Naive thymus-derived CD8-positive, alpha-beta T cell (primary cell): ENCODE measurements at regions of chr11 and their contacts with region 1.

Region 1: GRCh38 chr11:72040726-72041441 is 39.5 kb downstream of the NUMA1 start:
- DNase-seq: peak; percentile 72 to 91 (median 80)
- ATAC-seq: peak; percentile 68 to 78
- H3K4me3 Mint-ChIP-seq: no peak overlapping the region
- H3K27ac Mint-ChIP-seq: no peak overlapping the region
- H3K4me1 Mint-ChIP-seq: peaks cover 34 to 44% (median 43%) of the 10 kb centered on the region in 4 donors
- H3K27me3 Mint-ChIP-seq: no peaks in the 10 kb centered on the region

Region 2: DNA sequence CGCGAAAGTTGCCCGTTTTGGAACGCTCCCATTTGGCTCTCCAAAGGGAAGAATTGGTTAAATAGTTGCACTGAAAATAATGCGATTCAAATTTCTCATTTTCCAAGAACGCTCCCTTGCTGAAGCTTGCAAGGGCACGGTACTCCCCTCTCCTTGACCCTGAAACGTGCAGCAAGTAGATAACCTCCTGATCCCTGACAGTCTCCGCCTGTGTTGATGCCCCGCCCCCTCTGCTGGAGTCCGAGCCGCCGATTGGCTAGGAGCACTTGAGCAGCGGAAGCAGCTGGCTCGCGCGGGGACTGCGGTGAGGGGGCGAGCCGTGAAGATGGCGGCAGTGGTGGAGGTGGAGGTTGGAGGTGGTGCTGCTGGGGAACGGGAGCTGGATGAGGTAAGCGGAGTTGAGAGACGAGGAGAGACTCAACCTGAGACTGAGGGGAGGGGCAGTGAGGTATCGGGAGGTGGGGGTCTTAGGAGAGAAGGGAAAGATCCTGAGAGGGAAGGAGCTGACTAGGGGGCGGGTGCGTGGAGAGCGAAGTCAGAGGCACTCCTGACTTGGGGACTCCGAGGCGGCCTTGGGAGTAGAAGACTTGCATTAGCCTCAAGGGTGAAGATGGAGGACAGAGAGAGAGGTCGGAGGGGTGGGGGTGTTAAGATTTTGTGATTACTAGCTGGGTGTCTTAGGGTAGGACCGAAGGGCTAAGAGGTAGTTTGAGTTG is 112.0 kb before region 1 on chr11 and contains the start of gene RNF121:
- POLR2A ChIA-PET with region 1: interaction called, 12 read pairs
- DNase-seq: peak; percentile 94 to 99 (median 97)
- ATAC-seq: peak; percentile 90 to 92
- H3K4me3 Mint-ChIP-seq: peak within 1 kb of the TSS; percentile 94 to 99 (median 98)
- H3K27ac Mint-ChIP-seq: peak within 1 kb of the TSS; percentile 97 to 100 (median 99)
- H3K4me1 Mint-ChIP-seq: peaks cover 25 to 57% (median 55%) of the 10 kb centered on the region in 4 donors
- H3K27me3 Mint-ChIP-seq: no peaks in the 10 kb centered on the region
- polyA plus RNA-seq, gene RNF121: 5.7 to 9.4 (median 7.7) TPM

Region 3: DNA sequence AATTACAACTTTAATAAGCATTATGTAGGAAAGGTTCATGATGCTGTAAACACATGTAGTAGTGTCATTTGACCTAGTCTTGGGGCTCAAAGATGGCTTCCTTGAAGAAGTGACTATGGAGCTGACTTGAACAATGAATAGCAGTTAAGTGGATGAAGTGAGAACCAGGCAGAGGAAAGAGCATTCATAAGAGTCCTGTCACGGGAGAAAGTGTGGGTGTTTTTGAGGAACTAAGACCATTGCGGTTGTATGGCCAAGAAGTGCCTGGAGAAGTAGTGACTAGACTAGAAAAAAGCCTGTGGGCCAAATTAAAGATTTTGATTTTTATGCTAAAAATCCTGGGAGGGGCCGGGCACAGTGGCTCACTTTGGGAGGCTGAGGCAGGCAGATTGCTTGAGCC is 49.4 kb before region 1 on chr11:
- POLR2A ChIA-PET with region 1: no interaction called
- DNase-seq: no peak
- ATAC-seq: no peak
- H3K4me3 Mint-ChIP-seq: no peak overlapping the region
- H3K27ac Mint-ChIP-seq: peak overlapping the region in 2 of 10 donors; percentile 14 to 19
- H3K4me1 Mint-ChIP-seq: peaks cover 0 to 34% (median 2%) of the 10 kb centered on the region in 4 donors
- H3K27me3 Mint-ChIP-seq: no peaks in the 10 kb centered on the region

Region 4: DNA sequence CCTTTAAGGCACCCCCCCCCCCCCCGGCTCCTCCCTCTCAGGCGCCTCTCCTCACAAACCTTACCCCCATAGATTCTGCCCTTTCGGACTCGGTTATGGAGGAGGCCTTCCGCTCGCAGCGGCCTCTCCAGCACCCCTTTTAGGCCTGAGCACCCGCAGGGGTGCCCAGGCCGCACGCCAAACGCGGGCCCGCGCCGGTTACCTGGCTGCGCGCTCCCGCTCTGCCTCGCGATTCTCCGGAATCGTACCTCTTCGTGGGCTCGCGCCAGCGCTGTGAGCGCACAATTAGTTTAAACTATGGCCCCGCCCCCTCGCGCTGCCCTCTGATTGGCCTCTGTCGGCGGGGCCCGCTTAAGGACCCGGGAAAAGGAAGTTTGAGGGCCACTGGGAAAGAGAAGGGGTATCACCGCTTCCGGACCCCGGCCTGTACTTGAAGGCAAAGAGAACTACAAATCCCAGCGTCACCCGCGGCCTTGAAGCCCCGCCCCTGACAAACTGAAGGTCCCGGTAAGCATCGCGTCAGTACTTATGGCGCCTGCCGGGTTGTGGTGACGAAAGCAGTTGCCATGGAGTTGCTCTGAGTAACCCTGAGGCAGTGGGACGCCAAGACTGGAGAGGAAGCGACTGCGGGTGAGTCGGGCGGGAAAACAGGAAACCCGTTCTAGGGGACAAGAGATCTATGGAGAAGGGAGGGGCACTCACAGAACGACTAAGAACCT is 39.5 kb after region 1 on chr11 and contains the starts of genes LRRC51 and NUMA1:
- POLR2A ChIA-PET with region 1: interaction called, 56 read pairs
- DNase-seq: peak; percentile 89 to 100 (median 99)
- ATAC-seq: peak; percentile 89 to 92
- H3K4me3 Mint-ChIP-seq: peak within 1 kb of the TSS; percentile 88 to 100 (median 92)
- H3K27ac Mint-ChIP-seq: peak within 1 kb of the TSS; percentile 95 to 100 (median 98)
- H3K4me1 Mint-ChIP-seq: peaks cover 25 to 56% (median 44%) of the 10 kb centered on the region in 4 donors
- H3K27me3 Mint-ChIP-seq: no peaks in the 10 kb centered on the region
- polyA plus RNA-seq, gene LRRC51: 1.5 to 3.1 (median 2.5) TPM
- polyA plus RNA-seq, gene NUMA1: 12.0 to 119 (median 30.6) TPM

Region 5: DNA sequence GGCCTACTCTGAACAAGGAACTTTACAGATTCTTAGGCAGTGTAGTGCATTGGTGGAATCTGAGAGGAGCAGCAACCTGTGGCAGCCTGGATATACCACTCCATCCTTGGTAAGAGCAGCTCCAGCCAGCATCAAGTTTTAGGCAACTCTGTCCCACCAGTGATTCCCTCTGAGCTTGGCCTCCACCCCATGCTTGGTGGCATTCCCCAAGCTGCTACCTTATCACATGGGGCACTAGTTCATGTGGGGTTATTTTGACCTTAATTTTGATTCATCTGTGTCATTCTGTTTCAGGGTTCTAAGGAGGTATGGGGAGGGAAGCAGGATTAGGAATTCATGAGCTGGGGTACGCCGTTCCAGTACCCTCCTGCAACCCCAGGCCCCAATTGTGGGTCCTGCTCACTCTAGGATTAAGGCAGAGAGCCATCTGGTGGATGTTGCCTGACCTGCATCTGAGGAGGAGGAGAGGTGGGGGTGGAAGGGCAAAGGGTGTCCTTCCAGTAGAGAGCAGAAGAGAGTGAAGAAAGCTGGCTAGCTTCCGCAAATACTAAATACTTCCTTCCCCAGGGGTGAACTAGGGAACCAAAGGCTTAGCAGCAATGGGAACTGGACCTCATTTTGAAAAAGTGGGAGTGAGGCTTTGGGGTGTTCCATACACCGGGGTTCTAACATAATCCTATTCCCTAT is 50.3 kb after region 1 on chr11:
- POLR2A ChIA-PET with region 1: interaction called, 35 read pairs
- DNase-seq: peak; percentile 34 to 85 (median 68)
- ATAC-seq: peak; percentile 99
- H3K4me3 Mint-ChIP-seq: no peak overlapping the region
- H3K27ac Mint-ChIP-seq: peak overlapping the region in 8 of 10 donors; percentile 20 to 96 (median 84)
- H3K4me1 Mint-ChIP-seq: peaks cover 16 to 19% (median 16%) of the 10 kb centered on the region in 4 donors
- H3K27me3 Mint-ChIP-seq: no peaks in the 10 kb centered on the region

Region 6: GRCh38 chr11:72112321-72113219 is 71.7 kb after region 1 on chr11 and contains the start of gene ANAPC15:
- POLR2A ChIA-PET with region 1: interaction called, 78 read pairs
- DNase-seq: peak; percentile 79 to 100 (median 99)
- ATAC-seq: peak; percentile 88 to 90
- H3K4me3 Mint-ChIP-seq: peak within 1 kb of the TSS; percentile 87 to 100 (median 96)
- H3K27ac Mint-ChIP-seq: peak within 1 kb of the TSS; percentile 95 to 99 (median 98)
- H3K4me1 Mint-ChIP-seq: peaks cover 22 to 28% (median 25%) of the 10 kb centered on the region in 4 donors
- H3K27me3 Mint-ChIP-seq: peaks cover 0 to 8% (median 4%) of the 10 kb centered on the region in 5 donors
- polyA plus RNA-seq, gene ANAPC15: 81.7 to 102 (median 90.1) TPM